ENCODE measurements at regions of chr18 and their contacts with region 1.

Region 1: GRCh38 chr18:48675352-48675761 is 136.5 kb downstream of the CTIF start:
- DNase-seq: peak; percentile 74 to 98 (median 92)

Region 2: GRCh38 chr18:48728204-48728833 is 53.0 kb after region 1 on chr18:
- intact Hi-C with region 1: no loop called
- DNase-seq: peak in 1 of 10 donors; percentile 55

Region 3: GRCh38 chr18:48767090-48767690 is 91.8 kb after region 1 on chr18:
- intact Hi-C with region 1: loop called (anchors 5 kb)
- DNase-seq: peak in 2 of 10 donors; percentile 3 to 16

Region 4: DNA sequence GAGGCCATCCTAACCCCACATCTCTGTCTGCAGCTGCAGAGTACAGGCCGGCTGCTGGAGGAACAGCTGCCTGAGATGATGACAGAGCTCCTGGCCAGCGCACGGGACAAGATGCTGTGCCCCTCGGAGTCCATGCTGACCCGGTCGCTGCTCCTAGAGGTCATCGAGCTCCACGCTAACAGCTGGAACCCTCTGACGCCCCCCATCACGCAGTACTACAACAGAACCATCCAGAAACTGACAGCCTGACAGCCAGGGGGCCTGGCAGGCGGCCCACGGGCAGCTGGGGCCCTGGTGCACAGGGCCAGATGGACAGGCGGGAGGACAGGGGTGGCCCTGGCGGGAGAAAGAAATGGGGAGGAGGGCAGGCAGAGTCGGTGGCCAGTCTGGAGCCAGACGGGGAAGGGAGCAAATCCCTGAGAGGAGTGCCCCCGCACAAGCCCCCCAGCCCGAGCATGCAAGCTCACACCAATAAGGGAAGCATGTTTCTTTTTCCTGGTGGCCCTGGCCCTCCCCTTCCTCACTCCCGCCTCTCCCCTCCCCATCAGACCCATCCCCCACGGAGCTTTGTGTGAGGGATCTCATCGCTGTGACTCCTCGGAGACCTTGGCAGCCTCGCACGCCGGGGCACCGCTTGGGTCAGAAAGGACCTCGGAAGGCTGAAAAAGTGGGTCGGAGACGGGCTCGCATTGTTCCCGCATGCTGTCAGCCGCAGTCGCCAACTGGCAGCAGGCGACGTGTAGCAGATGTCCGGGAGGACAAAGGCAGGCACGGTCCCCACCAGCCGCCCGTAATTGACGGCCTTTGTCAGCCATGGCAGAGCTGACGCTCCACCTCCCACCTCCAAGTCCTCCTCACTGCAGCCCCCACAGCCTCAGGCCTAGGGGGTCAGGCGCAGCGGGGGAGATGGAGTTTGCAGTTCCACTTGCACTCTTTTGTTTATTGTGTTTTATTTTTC is 184.2 kb after region 1 on chr18:
- intact Hi-C with region 1: loop called (anchors 5 kb)
- DNase-seq: peak; percentile 80 to 98 (median 87)

Region 5: GRCh38 chr18:49006641-49007454 is 331.5 kb after region 1 on chr18:
- intact Hi-C with region 1: no loop called
- DNase-seq: peak in 2 of 10 donors; percentile 72 to 84

Region 6: GRCh38 chr18:49055754-49056172 is 380.4 kb after region 1 on chr18:
- intact Hi-C with region 1: loop called (anchors 10 kb)
- DNase-seq: peak in 1 of 10 donors; percentile 28

Region 7: DNA sequence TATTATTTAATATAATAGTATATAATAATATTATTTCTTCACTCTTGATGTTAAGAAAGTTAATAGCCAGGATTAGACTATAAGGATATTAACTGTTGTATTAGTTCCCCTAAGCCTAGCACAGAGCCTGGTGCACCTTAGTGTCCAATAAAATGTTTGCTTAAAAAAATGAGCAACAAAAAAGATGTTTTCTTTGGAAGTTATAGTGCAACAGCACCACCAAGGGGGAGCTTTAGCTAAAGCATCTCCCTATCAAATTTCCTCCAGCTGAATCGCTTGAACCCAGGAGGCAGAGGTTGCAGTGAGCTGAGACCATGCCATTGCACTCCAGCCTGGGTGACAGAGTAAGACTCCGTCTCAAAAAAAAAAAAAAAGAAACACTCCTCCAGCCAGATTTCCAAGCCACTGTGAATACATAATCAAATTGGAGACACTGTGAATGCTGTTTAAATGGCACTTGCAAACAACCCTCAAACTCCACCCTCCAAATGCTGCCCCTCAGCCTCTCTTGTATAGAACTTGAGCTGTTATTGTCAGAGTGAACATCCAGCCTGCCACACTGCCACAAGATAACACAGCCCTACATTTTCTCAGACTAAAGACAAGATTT is 563.2 kb after region 1 on chr18:
- intact Hi-C with region 1: loop called (anchors 5 kb)
- DNase-seq: no peak

Measured in posterior cingulate gyrus (tissue), 11 donors.